ENCODE measurements at regions of chr5 and their contacts with region 1.

Region 1: DNA sequence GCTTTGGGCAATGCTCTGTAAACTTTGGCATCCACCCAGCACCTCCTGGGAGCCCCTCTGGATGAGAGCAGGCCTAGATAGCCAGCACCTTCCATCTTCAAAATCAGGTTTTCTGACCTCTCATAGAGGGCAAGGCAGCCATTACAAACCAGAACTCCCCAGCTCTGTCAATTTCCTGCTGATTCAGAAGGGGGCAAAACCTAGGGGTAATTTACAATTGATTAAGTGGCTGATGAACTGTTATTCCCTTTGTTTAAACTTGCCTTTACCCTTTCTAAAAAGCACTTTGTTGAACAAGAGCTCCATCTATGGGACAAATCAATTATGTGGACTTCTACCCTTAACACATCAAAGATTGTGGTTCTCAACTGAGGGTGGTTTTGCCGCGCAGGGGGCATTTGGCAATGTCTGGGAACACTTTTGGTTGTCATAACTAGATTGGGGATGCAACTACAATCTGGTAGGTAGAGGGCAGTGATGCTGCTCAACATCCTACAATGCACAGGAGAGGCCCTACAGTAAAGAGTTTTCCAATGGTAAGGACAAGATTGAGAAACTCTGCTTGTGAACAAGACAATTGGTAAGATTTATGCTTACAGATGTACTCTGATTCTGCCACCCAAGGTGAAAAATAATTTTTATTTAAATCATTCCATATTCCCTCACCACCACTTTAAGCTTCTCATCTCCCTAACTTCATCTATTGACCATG is 184.1 kb downstream of the MARCHF11 start:
- DNase-seq: peak in 1 of 2 experiments; percentile 20
- H3K4me3 ChIP-seq: no peak overlapping the region
- H3K4me3 Mint-ChIP-seq: no peak overlapping the region
- H3K27ac Mint-ChIP-seq: no peak overlapping the region
- H3K4me1 ChIP-seq: no peaks in the 10 kb centered on the region
- H3K4me1 Mint-ChIP-seq: no peaks in the 10 kb centered on the region
- H3K27me3 ChIP-seq: no peaks in the 10 kb centered on the region
- H3K27me3 Mint-ChIP-seq: peaks cover 4% of the 10 kb centered on the region
- CTCF ChIP-seq: peak; percentile 32 to 37

Region 2: GRCh38 chr5:15105796-15106393 is 889.6 kb before region 1 on chr5:
- CTCF ChIA-PET with region 1: interaction called, 6 read pairs
- POLR2A ChIA-PET with region 1: no interaction called
- intact Hi-C with region 1: loop called (anchors 2 kb)
- DNase-seq: peak; percentile 45 to 51
- H3K4me3 ChIP-seq: no peak overlapping the region
- H3K4me3 Mint-ChIP-seq: no peak overlapping the region
- H3K27ac Mint-ChIP-seq: no peak overlapping the region
- H3K4me1 ChIP-seq: no peaks in the 10 kb centered on the region
- H3K4me1 Mint-ChIP-seq: no peaks in the 10 kb centered on the region
- H3K27me3 ChIP-seq: no peaks in the 10 kb centered on the region
- H3K27me3 Mint-ChIP-seq: peaks cover 6% of the 10 kb centered on the region
- CTCF ChIP-seq: peak; percentile 57 to 79

Region 3: DNA sequence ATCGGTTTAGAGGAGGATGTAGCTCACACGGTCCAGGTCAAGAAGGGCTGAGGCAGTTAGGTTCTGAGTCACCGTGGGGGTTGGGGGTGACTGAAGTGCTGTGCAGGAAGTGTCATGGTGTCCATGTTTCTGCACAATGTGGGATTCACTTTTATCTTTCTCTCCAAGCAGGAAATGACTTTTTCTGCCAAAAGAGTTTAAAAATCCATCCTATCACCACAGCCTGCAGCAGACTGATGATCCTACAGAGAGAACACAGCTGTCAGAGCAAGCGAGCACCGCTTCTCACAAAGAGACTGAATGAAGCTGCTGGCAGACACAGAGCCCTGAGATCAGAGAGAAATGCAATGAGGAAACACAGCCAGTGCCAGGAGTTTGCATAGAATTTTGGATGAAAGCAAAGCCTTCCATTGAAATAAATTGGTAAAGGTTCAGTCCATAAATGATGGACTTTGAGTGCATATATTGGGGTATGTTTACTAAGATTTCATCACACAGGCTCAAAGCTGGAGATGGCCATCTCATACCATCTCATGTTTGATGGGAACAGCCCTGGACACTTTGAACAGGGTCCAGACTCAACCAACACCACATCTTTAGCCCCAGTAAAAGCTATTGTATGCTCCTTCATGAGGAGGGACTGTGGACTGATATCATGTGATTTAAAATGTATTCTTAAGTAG is 709.5 kb before region 1 on chr5:
- CTCF ChIA-PET with region 1: no interaction called
- POLR2A ChIA-PET with region 1: no interaction called
- intact Hi-C with region 1: loop called (anchors 5 kb)
- DNase-seq: no peak
- H3K4me3 ChIP-seq: no peak overlapping the region
- H3K4me3 Mint-ChIP-seq: no peak overlapping the region
- H3K27ac Mint-ChIP-seq: no peak overlapping the region
- H3K4me1 ChIP-seq: no peaks in the 10 kb centered on the region
- H3K4me1 Mint-ChIP-seq: no peaks in the 10 kb centered on the region
- H3K27me3 ChIP-seq: no peaks in the 10 kb centered on the region
- H3K27me3 Mint-ChIP-seq: peaks cover 8% of the 10 kb centered on the region
- CTCF ChIP-seq: no peak

Region 4: DNA sequence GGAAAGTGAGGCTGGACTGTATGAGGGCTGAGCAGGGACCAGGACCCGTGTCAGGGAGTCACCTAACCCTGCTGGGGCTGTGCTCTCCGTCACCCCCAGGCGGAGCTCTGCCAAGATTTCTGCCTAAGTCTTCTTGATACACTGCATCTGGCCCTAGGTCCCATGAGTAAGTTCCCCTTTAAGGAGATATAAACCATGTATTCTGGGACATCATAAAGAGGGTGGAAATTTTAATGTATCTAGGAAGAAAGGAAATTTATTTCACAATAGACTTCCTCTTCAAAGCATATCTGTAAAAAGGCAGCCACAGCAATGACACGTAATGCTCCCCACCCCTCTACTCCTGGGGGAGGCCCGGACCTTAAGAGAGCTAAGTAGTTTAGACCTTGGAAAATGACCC is 312.2 kb before region 1 on chr5:
- CTCF ChIA-PET with region 1: no interaction called
- POLR2A ChIA-PET with region 1: no interaction called
- intact Hi-C with region 1: loop called (anchors 1 kb)
- DNase-seq: peak; percentile 16 to 41
- H3K4me3 ChIP-seq: no peak overlapping the region
- H3K4me3 Mint-ChIP-seq: no peak overlapping the region
- H3K27ac Mint-ChIP-seq: no peak overlapping the region
- H3K4me1 ChIP-seq: no peaks in the 10 kb centered on the region
- H3K4me1 Mint-ChIP-seq: no peaks in the 10 kb centered on the region
- H3K27me3 ChIP-seq: no peaks in the 10 kb centered on the region
- H3K27me3 Mint-ChIP-seq: no peaks in the 10 kb centered on the region
- CTCF ChIP-seq: peak; percentile 29 to 47